ENCODE measurements at regions of chr1 and their contacts with region 1.

Region 1: DNA sequence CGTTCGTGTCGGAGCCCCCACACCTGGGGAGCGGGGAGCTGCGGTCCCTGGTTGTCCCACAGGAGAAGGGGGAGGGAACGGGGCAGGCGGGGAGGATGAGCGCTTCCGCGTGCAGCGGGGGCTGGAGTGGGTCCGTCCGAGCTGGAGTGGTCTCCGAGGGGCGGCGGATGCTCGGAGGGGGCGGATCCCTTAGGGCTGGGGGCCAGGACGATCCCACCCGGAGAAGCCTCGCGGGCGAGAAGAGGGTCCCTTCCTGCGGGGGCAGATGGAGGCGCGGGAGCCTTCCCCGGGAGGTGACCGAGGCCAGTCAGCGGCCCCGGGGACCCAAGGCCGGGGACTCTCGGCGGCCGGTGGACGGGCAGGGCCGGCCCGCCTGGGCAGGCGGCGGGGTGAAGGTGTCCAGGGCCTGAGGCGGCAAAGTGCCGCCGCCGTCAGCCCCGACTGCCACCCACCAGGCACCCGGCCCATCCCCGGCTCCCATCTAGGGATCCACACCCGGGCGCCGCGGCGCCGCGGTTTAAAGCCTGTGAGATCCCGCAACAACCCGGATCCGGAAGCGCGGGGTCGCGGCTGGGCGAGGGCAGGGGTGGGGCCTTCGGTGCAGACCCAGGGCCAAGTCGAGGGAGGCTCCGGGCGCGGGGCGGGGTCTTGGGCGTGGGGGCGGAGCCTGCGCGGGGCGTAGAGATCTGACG is 5.3 kb upstream of the CCDC27 start:
- DNase-seq: peak; percentile 95
- ATAC-seq: peak; percentile 99
- H3K4me3 Mint-ChIP-seq: peak overlapping the region; percentile 77
- H3K27ac Mint-ChIP-seq: peak overlapping the region; percentile 51
- H3K4me1 Mint-ChIP-seq: peaks cover 32% of the 10 kb centered on the region
- H3K27me3 Mint-ChIP-seq: no peaks in the 10 kb centered on the region

Region 2: GRCh38 chr1:3530926-3531818 is 215.8 kb before region 1 on chr1:
- CTCF ChIA-PET with region 1: no interaction called
- POLR2A ChIA-PET with region 1: no interaction called
- intact Hi-C with region 1: loop called in 1 of 2 experiments (anchors 1 kb)
- DNase-seq: peak; percentile 88
- ATAC-seq: peak; percentile 87
- H3K4me3 Mint-ChIP-seq: peak overlapping the region; percentile 69
- H3K27ac Mint-ChIP-seq: peak overlapping the region; percentile 87
- H3K4me1 Mint-ChIP-seq: peaks cover 13% of the 10 kb centered on the region
- H3K27me3 Mint-ChIP-seq: no peaks in the 10 kb centered on the region

Region 3: DNA sequence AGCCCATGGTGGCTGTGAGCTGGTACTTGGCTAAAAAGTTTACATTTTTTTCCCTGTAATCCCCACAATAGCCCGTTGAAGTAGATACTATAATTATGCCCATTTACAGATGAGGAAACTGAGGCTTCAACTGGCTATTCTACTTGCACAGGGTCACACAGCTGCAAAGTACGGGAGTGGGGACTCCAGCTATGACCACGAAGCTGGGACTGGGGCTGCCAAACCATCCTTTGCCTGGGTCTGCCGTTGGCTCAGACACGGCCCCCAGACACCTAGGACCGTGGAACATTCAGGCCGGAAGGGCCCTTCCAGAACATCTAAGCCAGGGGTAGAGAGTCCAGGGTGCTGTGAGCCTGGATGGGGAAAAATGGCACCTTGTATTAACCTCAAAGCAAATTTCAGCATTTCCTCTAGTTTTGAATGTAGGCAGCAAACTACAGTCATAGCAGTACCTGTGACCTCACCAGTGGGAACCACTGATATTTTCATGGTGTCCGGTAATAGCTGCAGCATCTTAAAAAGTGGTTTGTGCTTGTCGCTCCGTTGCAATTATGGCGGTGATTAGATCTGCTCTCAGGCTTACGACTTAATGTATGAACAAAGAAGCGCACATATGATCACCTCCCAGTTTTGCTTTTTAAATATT is 90.4 kb before region 1 on chr1:
- CTCF ChIA-PET with region 1: no interaction called
- POLR2A ChIA-PET with region 1: no interaction called
- intact Hi-C with region 1: no loop called
- DNase-seq: peak; percentile 38
- ATAC-seq: peak; percentile 70
- H3K4me3 Mint-ChIP-seq: no peak overlapping the region
- H3K27ac Mint-ChIP-seq: no peak overlapping the region
- H3K4me1 Mint-ChIP-seq: peaks cover 2% of the 10 kb centered on the region
- H3K27me3 Mint-ChIP-seq: peaks cover 40% of the 10 kb centered on the region

Region 4: GRCh38 chr1:3668585-3669300 is 78.2 kb before region 1 on chr1:
- CTCF ChIA-PET with region 1: no interaction called
- POLR2A ChIA-PET with region 1: no interaction called
- intact Hi-C with region 1: no loop called
- DNase-seq: no peak
- ATAC-seq: no peak
- H3K4me3 Mint-ChIP-seq: no peak overlapping the region
- H3K27ac Mint-ChIP-seq: no peak overlapping the region
- H3K4me1 Mint-ChIP-seq: peaks cover 2% of the 10 kb centered on the region
- H3K27me3 Mint-ChIP-seq: no peaks in the 10 kb centered on the region

Region 5: DNA sequence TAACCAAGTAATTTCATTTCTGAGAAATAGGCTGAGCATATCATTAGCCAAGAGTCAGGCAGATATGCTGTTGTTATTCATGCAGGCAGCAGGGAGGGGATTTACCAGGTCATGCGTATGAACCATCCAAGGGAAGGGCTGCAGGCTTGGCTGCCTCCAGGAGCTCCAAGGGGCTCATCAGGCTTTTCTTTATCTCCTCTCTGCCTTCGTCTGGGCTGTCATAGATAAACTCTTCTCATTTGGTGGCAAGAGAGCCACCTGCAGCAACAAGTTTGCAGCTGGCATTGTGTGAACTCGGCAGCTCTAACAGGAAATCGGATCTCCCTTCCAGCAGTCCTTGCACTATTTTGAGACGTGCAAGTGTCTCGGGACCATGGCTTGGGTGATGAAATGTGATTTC is 12.8 kb after region 1 on chr1:
- CTCF ChIA-PET with region 1: no interaction called
- POLR2A ChIA-PET with region 1: no interaction called
- intact Hi-C with region 1: no loop called
- DNase-seq: no peak
- ATAC-seq: no peak
- H3K4me3 Mint-ChIP-seq: no peak overlapping the region
- H3K27ac Mint-ChIP-seq: no peak overlapping the region
- H3K4me1 Mint-ChIP-seq: no peaks in the 10 kb centered on the region
- H3K27me3 Mint-ChIP-seq: peaks cover 14% of the 10 kb centered on the region

Region 6: DNA sequence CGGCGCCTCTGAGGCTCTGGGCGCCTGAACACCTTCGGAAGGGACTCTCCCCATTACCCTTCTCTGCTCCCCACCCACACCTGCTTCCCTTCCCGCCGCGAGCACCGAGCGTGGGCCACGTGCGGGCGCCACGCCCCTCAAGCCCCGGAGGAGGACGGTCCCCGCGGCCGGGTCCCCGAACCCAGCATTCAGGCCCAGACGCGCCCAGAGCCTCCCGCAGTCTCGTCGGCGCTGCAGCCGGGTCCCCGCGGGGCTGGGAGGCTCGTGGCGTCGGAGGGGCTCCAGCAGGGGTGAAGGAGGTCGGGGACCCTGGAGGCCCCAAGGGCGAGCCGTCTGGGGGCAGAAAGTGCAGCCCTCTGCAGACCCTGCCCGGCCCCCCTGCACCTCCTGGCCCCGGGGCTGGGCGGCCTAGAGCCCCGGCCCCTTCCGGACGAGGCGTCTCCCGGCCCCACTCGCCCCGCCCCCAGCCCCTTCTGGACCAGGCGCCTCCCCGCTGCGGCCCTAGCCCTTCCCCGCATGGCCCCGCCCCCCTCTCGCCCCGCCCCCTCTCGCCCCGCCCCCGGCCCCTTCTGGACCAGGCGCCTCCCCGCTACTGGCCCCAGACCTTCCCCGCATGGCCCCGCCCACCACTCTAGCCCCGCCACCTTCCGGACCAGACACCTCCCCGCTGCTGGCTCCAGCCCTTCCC is 25.2 kb after region 1 on chr1:
- CTCF ChIA-PET with region 1: no interaction called
- POLR2A ChIA-PET with region 1: no interaction called
- intact Hi-C with region 1: loop called in 1 of 2 experiments (anchors 1 kb)
- DNase-seq: peak; percentile 94
- ATAC-seq: peak; percentile 81
- H3K4me3 Mint-ChIP-seq: peak overlapping the region; percentile 70
- H3K27ac Mint-ChIP-seq: peak overlapping the region; percentile 78
- H3K4me1 Mint-ChIP-seq: peaks cover 10% of the 10 kb centered on the region
- H3K27me3 Mint-ChIP-seq: no peaks in the 10 kb centered on the region

Region 7: GRCh38 chr1:3796215-3797061 is 49.5 kb after region 1 on chr1 and contains the start of gene LRRC47:
- CTCF ChIA-PET with region 1: no interaction called
- POLR2A ChIA-PET with region 1: no interaction called
- intact Hi-C with region 1: loop called (anchors 1 kb)
- DNase-seq: peak; percentile 97
- ATAC-seq: peak; percentile 99
- H3K4me3 Mint-ChIP-seq: peak within 1 kb of the TSS; percentile 81
- H3K27ac Mint-ChIP-seq: peak within 1 kb of the TSS; percentile 87
- H3K4me1 Mint-ChIP-seq: peaks cover 44% of the 10 kb centered on the region
- H3K27me3 Mint-ChIP-seq: peaks cover 6% of the 10 kb centered on the region
- total RNA-seq, gene LRRC47: 34.8 to 38.7 TPM

Region 8: GRCh38 chr1:3900119-3900968 is 153.4 kb after region 1 on chr1 and contains the start of gene C1orf174:
- CTCF ChIA-PET with region 1: no interaction called
- POLR2A ChIA-PET with region 1: no interaction called
- intact Hi-C with region 1: loop called in 1 of 2 experiments (anchors 1 kb)
- DNase-seq: peak; percentile 94
- ATAC-seq: peak; percentile 76
- H3K4me3 Mint-ChIP-seq: peak within 1 kb of the TSS; percentile 87
- H3K27ac Mint-ChIP-seq: peak within 1 kb of the TSS; percentile 98
- H3K4me1 Mint-ChIP-seq: peaks cover 51% of the 10 kb centered on the region
- H3K27me3 Mint-ChIP-seq: no peaks in the 10 kb centered on the region
- total RNA-seq, gene C1orf174: 39.8 to 49.4 TPM